ENCODE measurements at regions of chr18 and their contacts with region 1.

Region 1: DNA sequence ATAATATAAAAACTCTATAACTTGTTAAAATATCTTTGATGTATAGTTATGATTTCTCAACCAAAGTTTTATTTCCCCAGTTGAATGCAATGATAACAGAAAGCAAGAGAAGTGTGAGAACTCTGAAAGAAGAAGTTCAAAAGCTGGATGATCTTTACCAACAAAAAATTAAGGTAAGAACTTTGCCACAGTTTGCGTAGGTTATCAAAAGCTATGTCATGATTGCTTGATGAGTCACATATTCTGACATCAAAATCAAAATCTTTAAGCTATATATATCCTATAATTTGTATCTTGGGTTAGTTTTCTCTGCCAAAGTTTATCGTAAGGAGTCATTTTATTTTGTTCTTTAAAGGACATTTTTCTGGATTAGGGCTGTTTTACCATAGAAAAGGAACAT is 35.0 kb downstream of the NDC80 start:
- DNase-seq: no peak
- ATAC-seq: no peak
- H3K4me3 ChIP-seq: no peak overlapping the region
- H3K27ac ChIP-seq: no peak overlapping the region
- H3K4me1 ChIP-seq: peaks cover 15% of the 10 kb centered on the region
- H3K27me3 ChIP-seq: no peaks in the 10 kb centered on the region
- CTCF ChIP-seq: no peak

Region 2: DNA sequence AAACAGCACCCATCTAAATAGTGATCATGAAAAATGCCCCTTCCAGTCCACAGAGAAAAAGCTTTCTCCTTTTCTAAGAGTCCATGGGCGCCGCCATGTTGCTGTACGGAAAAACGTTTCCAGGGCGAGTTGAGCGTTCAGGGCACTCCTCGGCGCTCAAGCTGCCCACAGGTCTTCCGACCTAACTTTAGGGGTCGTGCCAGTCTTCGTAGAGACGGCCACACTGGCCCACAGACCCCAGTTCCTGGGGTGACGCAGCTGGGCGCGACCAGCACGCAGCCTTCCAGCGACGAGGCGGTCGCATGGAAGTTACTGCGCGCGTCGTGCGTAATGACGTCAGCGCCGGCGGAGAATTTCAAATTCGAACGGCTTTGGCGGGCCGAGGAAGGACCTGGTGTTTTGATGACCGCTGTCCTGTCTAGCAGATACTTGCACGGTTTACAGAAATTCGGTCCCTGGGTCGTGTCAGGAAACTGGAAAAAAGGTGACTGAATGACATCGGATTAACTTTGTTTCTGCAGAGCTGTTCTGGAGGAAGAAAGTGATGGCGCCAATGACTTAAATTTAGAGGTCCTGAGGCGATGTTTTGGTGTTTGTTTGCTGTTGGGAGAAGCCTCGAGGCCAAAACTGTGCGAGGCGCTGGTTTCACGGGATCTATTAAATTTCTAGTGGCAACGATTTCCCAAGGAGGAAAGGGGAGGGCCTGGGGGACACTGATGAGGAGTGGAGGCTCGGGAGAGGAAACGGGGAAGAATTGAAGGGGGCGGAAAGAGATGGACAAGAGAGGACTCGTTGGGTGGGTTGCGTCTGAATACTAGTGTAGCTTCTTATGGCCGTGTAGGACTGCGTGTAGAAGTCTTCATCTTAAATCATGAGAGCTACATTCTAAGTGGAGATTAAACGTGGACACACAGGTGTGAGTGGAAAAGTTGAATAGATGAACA is 34.9 kb before region 1 on chr18 and contains the starts of genes METTL4 and NDC80:
- CTCF ChIA-PET with region 1: no interaction called
- POLR2A ChIA-PET with region 1: interaction called, 4 read pairs
- intact Hi-C with region 1: loop called (anchors 5 kb)
- DNase-seq: peak; percentile 94
- ATAC-seq: peak; percentile 76
- H3K4me3 ChIP-seq: peak within 1 kb of the TSS; percentile 97
- H3K27ac ChIP-seq: peak within 1 kb of the TSS; percentile 90
- H3K4me1 ChIP-seq: peaks cover 15% of the 10 kb centered on the region
- H3K27me3 ChIP-seq: no peaks in the 10 kb centered on the region
- CTCF ChIP-seq: no peak
- total RNA-seq, gene METTL4: 7.5 and 8.6 TPM in 2 replicates
- total RNA-seq, gene NDC80: 26.0 and 53.4 TPM in 2 replicates

Region 3: DNA sequence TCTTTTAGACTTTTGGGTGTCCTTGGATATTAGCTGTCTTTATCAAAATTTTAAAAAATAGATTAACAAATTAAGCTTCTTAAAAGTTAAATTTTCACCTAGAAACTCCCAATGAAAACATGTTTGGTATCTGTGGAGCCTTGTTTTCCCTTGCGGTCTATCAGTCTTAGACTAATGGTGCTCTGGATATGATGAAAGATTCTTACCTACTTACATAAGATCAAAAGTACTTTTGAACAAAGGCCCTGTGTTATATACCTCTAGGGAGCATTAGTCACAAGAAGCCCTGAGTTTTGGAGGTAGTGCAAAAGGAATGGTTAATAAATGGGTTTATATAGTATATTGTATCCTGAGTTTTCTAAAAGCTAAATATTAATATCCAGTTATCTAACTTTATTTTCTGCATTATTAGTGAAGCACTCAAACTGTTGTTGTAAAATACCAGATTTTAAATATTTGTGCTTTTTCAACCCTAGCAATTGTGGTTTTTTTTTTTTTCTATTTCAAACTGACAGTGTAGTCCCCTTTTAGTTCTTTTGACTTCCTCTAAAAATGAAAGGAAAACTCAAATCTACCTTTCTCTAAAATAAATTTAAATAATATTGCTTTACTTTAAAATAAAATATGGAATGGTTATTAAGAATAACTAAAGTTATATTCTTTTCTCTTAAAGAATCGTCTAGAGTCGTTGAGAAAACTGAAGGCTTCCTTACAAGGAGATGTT is 16.8 kb before region 1 on chr18:
- CTCF ChIA-PET with region 1: no interaction called
- POLR2A ChIA-PET with region 1: interaction called, 3 read pairs
- intact Hi-C with region 1: loop called (anchors 2 kb)
- DNase-seq: peak; percentile 17
- ATAC-seq: peak; percentile 43
- H3K4me3 ChIP-seq: no peak overlapping the region
- H3K27ac ChIP-seq: no peak overlapping the region
- H3K4me1 ChIP-seq: peaks cover 16% of the 10 kb centered on the region
- H3K27me3 ChIP-seq: no peaks in the 10 kb centered on the region
- CTCF ChIP-seq: no peak

Region 4: DNA sequence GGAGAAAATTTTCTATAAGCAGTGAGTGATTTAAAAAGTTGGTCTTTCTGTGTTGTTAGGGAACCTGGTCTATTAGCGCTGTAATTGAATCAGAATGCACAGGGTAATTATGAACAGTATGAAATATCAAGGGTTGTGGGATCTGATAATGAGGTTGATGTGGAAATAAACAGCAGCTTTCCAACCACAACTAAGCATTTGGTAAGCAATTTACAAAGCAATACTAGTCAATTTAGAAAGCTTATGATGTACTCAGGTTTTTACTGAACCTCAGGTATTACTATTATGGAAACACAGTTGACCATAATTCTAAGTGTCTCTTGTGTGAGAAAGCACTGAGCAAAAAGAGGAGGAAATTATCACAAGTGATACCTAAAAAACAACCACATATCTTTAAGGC is 38.2 kb after region 1 on chr18:
- CTCF ChIA-PET with region 1: no interaction called
- POLR2A ChIA-PET with region 1: no interaction called
- intact Hi-C with region 1: no loop called
- DNase-seq: no peak
- ATAC-seq: no peak
- H3K4me3 ChIP-seq: no peak overlapping the region
- H3K27ac ChIP-seq: no peak overlapping the region
- H3K4me1 ChIP-seq: no peaks in the 10 kb centered on the region
- H3K27me3 ChIP-seq: no peaks in the 10 kb centered on the region
- CTCF ChIP-seq: no peak

Measured in PC-3 (cell line).